Activated B cell treated with CpG ODN at 0.5 μM for 24 hours (primary cell): ENCODE measurements at regions of chr20 and their contacts with region 1.

Region 1: GRCh38 chr20:62740286-62741141 is 31.9 kb downstream of the NTSR1 start:
- DNase-seq: peak; percentile 55
- ATAC-seq: peak; percentile 85
- H3K4me3 Mint-ChIP-seq: peak overlapping the region; percentile 80
- H3K27ac Mint-ChIP-seq: peak overlapping the region; percentile 86
- H3K4me1 Mint-ChIP-seq: peaks cover 35% of the 10 kb centered on the region
- H3K27me3 Mint-ChIP-seq: no peaks in the 10 kb centered on the region
- CTCF ChIP-seq: no peak

Region 2: DNA sequence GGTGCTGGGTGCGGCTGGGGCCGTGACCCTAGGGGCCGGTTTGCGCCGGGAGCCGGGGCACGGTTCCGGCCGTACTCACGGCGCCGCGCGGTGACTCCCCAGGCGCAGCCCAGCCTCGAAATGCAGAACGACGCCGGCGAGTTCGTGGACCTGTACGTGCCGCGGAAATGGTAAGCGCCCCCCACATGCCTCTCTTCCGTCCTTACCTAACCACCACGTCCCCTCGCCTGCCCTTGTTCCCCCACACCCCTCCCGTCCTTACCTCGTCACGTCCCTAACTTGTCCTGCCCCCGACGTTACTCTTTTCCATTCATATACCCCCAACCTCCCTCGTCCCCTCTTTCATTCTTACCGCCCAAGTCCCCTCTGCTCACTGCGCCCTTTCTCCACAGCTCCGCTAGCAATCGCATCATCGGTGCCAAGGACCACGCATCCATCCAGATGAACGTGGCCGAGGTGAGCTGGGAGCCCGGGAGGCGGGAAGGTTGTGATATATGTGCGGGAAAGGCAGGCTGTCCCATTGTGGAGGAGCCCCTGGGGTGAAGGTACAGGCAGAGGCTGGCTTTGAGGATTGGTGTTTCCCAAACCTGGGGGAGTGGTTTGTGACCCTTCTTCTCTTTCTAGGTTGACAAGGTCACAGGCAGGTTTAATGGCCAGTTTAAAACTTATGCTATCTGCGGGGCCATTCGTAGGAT is 353.1 kb before region 1 on chr20:
- CTCF ChIA-PET with region 1: no interaction called
- POLR2A ChIA-PET with region 1: no interaction called
- intact Hi-C with region 1: no loop called
- DNase-seq: no peak
- ATAC-seq: no peak
- H3K4me3 Mint-ChIP-seq: peak overlapping the region; percentile 89
- H3K27ac Mint-ChIP-seq: peak overlapping the region; percentile 74
- H3K4me1 Mint-ChIP-seq: peaks cover 48% of the 10 kb centered on the region
- H3K27me3 Mint-ChIP-seq: no peaks in the 10 kb centered on the region
- CTCF ChIP-seq: no peak

Region 3: GRCh38 chr20:62652051-62652926 is 88.2 kb before region 1 on chr20:
- CTCF ChIA-PET with region 1: no interaction called
- POLR2A ChIA-PET with region 1: interaction called, 13 read pairs
- intact Hi-C with region 1: loop called (anchors 1 kb)
- DNase-seq: peak; percentile 55
- ATAC-seq: peak; percentile 55
- H3K4me3 Mint-ChIP-seq: peak overlapping the region; percentile 82
- H3K27ac Mint-ChIP-seq: peak overlapping the region; percentile 94
- H3K4me1 Mint-ChIP-seq: peaks cover 63% of the 10 kb centered on the region
- H3K27me3 Mint-ChIP-seq: no peaks in the 10 kb centered on the region
- CTCF ChIP-seq: no peak

Region 4: GRCh38 chr20:62675156-62675876 is 65.2 kb before region 1 on chr20:
- CTCF ChIA-PET with region 1: no interaction called
- POLR2A ChIA-PET with region 1: no interaction called
- intact Hi-C with region 1: loop called (anchors 10 kb)
- DNase-seq: no peak
- ATAC-seq: no peak
- H3K4me3 Mint-ChIP-seq: no peak overlapping the region
- H3K27ac Mint-ChIP-seq: no peak overlapping the region
- H3K4me1 Mint-ChIP-seq: no peaks in the 10 kb centered on the region
- H3K27me3 Mint-ChIP-seq: no peaks in the 10 kb centered on the region
- CTCF ChIP-seq: no peak

Region 5: GRCh38 chr20:62762801-62763368 is 22.4 kb after region 1 on chr20:
- CTCF ChIA-PET with region 1: no interaction called
- POLR2A ChIA-PET with region 1: no interaction called
- intact Hi-C with region 1: loop called (anchors 1 kb)
- DNase-seq: no peak
- ATAC-seq: no peak
- H3K4me3 Mint-ChIP-seq: no peak overlapping the region
- H3K27ac Mint-ChIP-seq: no peak overlapping the region
- H3K4me1 Mint-ChIP-seq: no peaks in the 10 kb centered on the region
- H3K27me3 Mint-ChIP-seq: peaks cover 12% of the 10 kb centered on the region
- CTCF ChIP-seq: no peak

Region 6: DNA sequence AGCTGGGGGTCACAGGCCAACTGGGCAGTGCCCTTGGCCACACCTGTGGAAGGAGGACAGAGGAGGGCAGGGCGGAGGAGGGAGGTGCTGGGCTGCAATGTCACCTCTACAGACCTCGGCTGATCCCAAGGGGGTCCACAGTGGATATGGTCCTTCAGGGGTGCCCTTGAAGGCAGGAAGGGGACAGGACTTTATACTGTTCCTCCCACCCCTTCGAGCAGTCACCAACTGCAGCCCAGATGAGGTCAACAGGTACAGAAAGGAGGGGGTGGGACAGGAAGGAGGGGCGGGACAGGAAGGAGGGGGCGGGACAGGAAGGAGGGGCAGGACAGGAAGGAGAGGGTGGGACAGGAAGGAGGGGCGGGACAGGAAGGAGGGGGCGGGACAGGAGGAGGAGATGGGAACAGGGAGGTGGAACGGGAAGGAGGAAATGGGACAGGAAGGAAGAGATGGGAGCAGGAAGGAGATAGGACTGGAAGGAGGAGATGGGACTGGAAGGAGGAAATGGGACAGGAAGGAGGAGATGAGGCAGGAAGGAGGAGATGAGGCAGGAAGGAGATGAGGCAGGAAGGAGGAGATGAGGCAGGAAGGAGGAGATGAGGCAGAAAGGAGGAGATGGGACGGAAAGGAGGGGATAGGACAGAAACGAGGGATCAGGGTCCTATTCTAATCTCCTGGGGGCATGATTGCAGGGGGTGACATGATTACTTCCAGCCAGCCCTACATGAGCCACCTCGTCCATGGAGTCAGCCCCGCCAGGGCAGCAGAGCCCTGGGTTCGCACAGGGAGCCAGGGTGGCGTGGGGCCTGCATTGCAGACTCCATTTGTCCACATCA is 36.4 kb after region 1 on chr20:
- CTCF ChIA-PET with region 1: no interaction called
- POLR2A ChIA-PET with region 1: no interaction called
- intact Hi-C with region 1: loop called (anchors 2 kb)
- DNase-seq: no peak
- ATAC-seq: peak; percentile 77
- H3K4me3 Mint-ChIP-seq: peak overlapping the region; percentile 38
- H3K27ac Mint-ChIP-seq: peak overlapping the region; percentile 76
- H3K4me1 Mint-ChIP-seq: peaks cover 25% of the 10 kb centered on the region
- H3K27me3 Mint-ChIP-seq: no peaks in the 10 kb centered on the region
- CTCF ChIP-seq: no peak

Region 7: DNA sequence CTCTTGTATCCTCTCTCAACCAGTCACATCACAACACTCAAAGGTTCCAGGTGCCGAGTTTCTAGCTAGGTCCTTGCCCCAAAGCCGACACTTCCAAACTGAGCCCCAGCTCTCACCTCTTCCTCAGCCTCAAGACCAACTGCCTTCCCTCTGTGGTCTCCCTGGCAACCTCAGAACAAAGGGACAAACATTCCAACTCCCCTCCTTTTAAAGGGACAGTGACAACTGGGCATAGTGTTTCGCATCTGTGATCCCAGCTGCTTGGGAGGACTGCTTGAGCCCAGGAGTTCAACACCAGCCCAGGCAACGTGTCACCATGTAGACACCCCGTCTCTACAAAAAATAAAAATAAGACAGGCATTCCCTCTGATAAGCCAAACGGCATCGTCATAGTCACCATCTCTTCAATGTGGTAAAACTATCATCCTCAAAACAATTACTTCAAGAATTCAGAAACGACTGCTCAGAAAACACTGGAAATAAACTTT is 174.5 kb after region 1 on chr20:
- CTCF ChIA-PET with region 1: no interaction called
- POLR2A ChIA-PET with region 1: no interaction called
- intact Hi-C with region 1: no loop called
- DNase-seq: no peak
- ATAC-seq: no peak
- H3K4me3 Mint-ChIP-seq: no peak overlapping the region
- H3K27ac Mint-ChIP-seq: peak overlapping the region; percentile 56
- H3K4me1 Mint-ChIP-seq: peaks cover 60% of the 10 kb centered on the region
- H3K27me3 Mint-ChIP-seq: no peaks in the 10 kb centered on the region
- CTCF ChIP-seq: no peak

Region 8: DNA sequence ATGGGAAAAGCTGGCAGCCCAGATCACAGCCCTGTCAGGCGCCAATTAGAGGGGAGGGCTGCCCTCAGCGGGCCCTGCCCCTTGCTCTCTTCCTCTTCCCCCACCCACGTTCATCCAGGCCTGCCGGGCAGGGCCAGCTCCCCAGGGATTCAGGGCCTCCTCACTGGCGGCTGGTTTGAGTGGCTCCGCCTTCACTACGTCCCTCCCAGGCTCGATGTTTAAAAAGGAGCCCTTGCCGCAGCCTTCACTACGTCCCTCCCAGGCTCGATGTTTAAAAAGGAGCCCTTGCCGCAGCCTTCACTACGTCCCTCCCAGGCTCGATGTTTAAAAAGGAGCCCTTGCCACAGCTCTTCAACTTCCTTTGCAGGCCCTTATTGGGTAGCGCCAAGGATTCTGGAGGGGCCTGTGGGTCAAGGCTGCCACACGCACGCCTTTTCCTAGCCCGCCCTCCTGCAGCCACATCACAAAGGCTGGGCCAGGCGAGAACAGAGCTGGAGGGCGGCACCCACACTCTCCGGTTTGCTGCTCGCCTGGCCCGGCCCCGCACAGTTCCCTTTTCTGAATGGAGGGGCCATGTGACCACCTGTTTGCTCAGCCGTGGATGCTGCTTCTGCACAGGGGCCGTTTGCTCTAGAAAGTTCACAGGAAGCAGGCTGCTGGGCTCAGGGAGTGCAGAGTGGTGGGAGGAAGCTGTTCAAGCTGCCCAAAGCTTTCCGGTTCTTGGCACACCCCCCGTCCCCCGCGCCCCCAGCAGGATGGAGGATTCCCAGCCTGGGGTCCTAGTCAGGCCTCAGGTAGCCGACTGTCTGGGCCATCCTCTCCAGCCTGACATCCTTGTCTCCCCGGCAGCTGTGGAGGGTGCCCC is 213.6 kb after region 1 on chr20:
- CTCF ChIA-PET with region 1: no interaction called
- POLR2A ChIA-PET with region 1: no interaction called
- intact Hi-C with region 1: no loop called
- DNase-seq: peak; percentile 76
- ATAC-seq: peak; percentile 87
- H3K4me3 Mint-ChIP-seq: peak overlapping the region; percentile 86
- H3K27ac Mint-ChIP-seq: peak overlapping the region; percentile 96
- H3K4me1 Mint-ChIP-seq: peaks cover 38% of the 10 kb centered on the region
- H3K27me3 Mint-ChIP-seq: no peaks in the 10 kb centered on the region
- CTCF ChIP-seq: no peak

Region 9: DNA sequence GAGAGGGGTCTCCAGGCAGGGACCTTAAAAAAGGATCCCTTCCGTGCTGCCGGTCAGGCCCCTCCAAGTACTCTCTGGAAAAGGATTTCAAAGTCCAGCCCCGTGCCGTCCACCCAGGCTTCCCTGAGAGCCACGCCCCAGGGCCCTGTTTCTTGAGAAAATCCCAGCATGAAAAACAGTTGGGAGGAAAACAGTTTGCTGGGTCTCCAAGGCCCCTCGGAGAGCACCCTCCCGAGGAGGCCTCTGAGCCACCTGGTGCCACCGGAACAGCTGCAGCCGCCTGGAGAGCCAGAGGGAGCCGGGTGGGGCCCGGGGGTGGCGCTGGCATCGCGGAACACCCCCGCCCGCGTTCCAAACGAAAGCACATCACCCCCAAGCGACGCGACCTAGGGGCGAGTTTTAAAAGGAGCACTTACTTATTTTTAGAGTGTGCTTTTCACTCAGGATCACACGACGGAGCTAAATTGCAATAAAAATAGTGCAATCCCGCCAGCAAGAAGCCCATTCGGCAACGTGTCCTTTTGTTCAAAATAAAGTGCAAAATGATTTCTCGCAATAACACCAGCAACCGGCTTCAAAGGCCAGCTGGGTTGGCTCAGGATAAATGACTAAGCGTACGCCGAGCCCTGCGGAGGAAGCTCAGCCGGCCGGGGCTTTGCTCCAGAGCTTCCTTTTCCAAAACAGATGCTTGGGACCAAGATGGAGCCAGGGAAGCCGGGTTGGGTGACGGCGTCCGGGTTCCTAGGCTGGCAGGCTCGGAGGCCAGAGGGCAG is 411.2 kb after region 1 on chr20:
- CTCF ChIA-PET with region 1: no interaction called
- POLR2A ChIA-PET with region 1: no interaction called
- intact Hi-C with region 1: no loop called
- DNase-seq: no peak
- ATAC-seq: no peak
- H3K4me3 Mint-ChIP-seq: no peak overlapping the region
- H3K27ac Mint-ChIP-seq: no peak overlapping the region
- H3K4me1 Mint-ChIP-seq: no peaks in the 10 kb centered on the region
- H3K27me3 Mint-ChIP-seq: peaks cover 36% of the 10 kb centered on the region
- CTCF ChIP-seq: no peak